ENCODE measurements at regions of chr6 and their contacts with region 1.

Region 1: GRCh38 chr6:116392132-116393013 is 21.6 kb downstream of the DSE start:
- DNase-seq: peak; percentile 20
- H3K4me3 ChIP-seq: no peak overlapping the region
- H3K27ac ChIP-seq: no peak overlapping the region
- H3K4me1 ChIP-seq: peaks cover 23% of the 10 kb centered on the region
- CTCF ChIP-seq: no peak

Region 2: DNA sequence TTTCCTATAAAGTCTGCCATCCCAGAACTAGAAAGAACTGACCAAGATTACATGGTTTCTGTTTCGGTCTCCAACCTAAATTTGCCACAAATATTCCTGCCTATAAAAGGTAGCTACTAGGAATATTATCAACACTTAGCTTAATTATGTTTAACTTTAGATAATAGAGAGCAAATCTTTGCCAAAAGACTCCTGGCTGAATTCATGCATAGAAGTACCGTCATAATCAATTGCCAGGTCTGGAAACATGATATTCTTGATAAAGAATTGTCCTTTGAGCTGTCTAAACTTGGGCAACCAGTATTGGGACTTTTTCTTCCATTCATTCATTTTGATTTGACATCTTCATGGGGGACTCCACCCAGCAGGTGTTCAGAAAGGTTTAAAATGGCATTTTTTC is 91.2 kb after region 1 on chr6:
- CTCF ChIA-PET with region 1: no interaction called
- POLR2A ChIA-PET with region 1: interaction called, 4 read pairs
- intact Hi-C with region 1: loop called (anchors 5 kb)
- DNase-seq: no peak
- H3K4me3 ChIP-seq: no peak overlapping the region
- H3K27ac ChIP-seq: no peak overlapping the region
- H3K4me1 ChIP-seq: no peaks in the 10 kb centered on the region
- CTCF ChIP-seq: no peak

Measured in OCI-LY7 (cell line).